ENCODE measurements at regions of chrX and their contacts with region 1.

Region 1: DNA sequence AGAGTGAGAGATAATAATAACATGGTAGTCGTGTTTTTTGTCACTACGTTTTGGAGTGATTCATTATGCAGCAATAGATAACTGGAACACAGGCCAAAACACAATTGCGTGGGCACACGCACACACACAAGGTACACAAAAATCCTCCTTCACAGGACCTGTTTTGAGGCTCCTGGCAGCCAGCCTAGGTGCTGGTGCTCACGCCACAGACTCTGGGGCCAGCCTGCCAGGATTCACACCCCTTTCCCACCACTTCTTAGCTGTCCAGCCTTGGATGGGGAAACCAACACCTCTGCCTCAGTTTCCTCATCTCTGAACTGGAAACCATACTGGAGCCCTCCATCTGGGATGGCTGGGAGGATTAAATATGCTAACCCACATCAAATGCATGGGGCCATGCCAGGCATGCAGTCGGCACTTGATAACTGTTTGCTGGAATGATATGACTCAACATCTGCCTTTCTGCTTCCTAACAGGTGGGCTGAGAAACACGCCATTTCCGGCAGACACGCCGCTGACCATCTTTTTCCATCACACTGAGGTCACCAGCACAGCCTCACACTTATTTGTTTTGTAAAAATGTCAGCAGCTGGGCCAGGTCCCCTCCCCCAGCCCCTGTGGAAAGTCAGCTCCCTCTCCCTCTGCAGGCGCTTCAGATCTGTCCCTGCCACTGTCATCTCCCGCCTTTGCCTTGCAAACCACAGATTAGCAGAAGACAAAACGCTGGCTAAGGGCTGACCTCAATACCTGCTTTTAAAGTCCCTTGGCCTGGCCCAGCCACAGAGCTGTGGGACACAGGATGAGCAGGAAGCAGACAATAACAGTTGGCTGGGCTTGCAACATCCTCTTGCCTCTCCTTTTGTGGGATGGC is 237.5 kb downstream of the BCOR start:
- DNase-seq: peak; percentile 89
- ATAC-seq: peak; percentile 72
- H3K4me3 ChIP-seq: no peak overlapping the region
- H3K27ac ChIP-seq: peak overlapping the region; percentile 55
- H3K4me1 ChIP-seq: peaks cover 48% of the 10 kb centered on the region
- H3K27me3 ChIP-seq: no peaks in the 10 kb centered on the region
- CTCF ChIP-seq: no peak
- EP300 ChIP-seq: peak; percentile 91 to 98
- POLR2A ChIP-seq: no peak
- RAD21 ChIP-seq: no peak

Region 2: DNA sequence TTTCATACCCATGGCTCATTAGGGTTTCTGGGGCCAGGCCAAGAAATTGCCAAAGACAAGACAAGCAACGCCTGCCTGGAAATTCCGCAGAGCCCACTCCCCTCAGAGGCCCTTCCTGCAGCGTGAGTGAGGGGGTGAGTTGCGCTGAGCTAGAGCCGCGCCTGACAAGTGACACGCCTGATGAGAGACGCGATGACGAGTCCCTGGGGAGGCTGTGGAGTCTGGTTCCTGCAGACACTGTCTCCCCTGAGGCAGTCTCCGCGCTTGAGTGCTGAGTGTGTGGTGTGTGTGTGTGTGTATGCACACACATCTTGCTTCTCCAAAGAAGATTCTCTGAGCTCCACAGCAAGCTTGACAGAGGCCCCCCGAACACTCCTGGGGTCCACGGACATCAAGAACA is 32.3 kb before region 1 on chrX:
- CTCF ChIA-PET with region 1: interaction called, 21 read pairs
- POLR2A ChIA-PET with region 1: interaction called, 4 read pairs
- RAD21 ChIA-PET with region 1: interaction called, 22 read pairs
- SMC1A ChIA-PET with region 1: interaction called, 51 read pairs
- in situ Hi-C with region 1: no loop called
- intact Hi-C with region 1: no loop called
- DNase-seq: no peak
- ATAC-seq: peak; percentile 90
- H3K4me3 ChIP-seq: no peak overlapping the region
- H3K27ac ChIP-seq: no peak overlapping the region
- H3K4me1 ChIP-seq: no peaks in the 10 kb centered on the region; the same call in 1 of the 2 replicates
- H3K27me3 ChIP-seq: no peaks in the 10 kb centered on the region
- CTCF ChIP-seq: no peak
- EP300 ChIP-seq: no peak
- POLR2A ChIP-seq: no peak
- RAD21 ChIP-seq: no peak

Region 3: GRCh38 chrX:39874202-39874816 is 14.1 kb after region 1 on chrX:
- CTCF ChIA-PET with region 1: no interaction called
- POLR2A ChIA-PET with region 1: interaction called, 4 read pairs
- RAD21 ChIA-PET with region 1: interaction called, 12 read pairs
- SMC1A ChIA-PET with region 1: interaction called, 9 read pairs
- in situ Hi-C with region 1: no loop called
- intact Hi-C with region 1: loop called (anchors 2 kb)
- DNase-seq: peak; percentile 91
- ATAC-seq: peak; percentile 92
- H3K4me3 ChIP-seq: no peak overlapping the region
- H3K27ac ChIP-seq: peak overlapping the region; percentile 88
- H3K4me1 ChIP-seq: peaks cover 31% of the 10 kb centered on the region
- H3K27me3 ChIP-seq: no peaks in the 10 kb centered on the region
- CTCF ChIP-seq: no peak
- EP300 ChIP-seq: peak; percentile 94
- POLR2A ChIP-seq: no peak
- RAD21 ChIP-seq: peak; percentile 4; the same call in 1 of the 2 replicates

Region 4: GRCh38 chrX:39891781-39892180 is 31.6 kb after region 1 on chrX:
- CTCF ChIA-PET with region 1: no interaction called
- POLR2A ChIA-PET with region 1: no interaction called
- RAD21 ChIA-PET with region 1: no interaction called
- SMC1A ChIA-PET with region 1: interaction called, 17 read pairs
- in situ Hi-C with region 1: no loop called
- intact Hi-C with region 1: no loop called
- DNase-seq: peak; percentile 67
- ATAC-seq: peak; percentile 66
- H3K4me3 ChIP-seq: no peak overlapping the region
- H3K27ac ChIP-seq: peak overlapping the region; percentile 54; the same call in 1 of the 2 replicates
- H3K4me1 ChIP-seq: peaks cover 24% of the 10 kb centered on the region
- H3K27me3 ChIP-seq: no peaks in the 10 kb centered on the region
- CTCF ChIP-seq: no peak
- EP300 ChIP-seq: no peak
- POLR2A ChIP-seq: no peak
- RAD21 ChIP-seq: no peak